Ovary (tissue), 10 donors: ENCODE measurements at regions of chr6 and their contacts with region 1.

Region 1: GRCh38 chr6:46419576-46420002 is 71.7 kb downstream of the RCAN2 start:
- DNase-seq: peak; percentile 50 to 82 (median 52)
- H3K4me3 ChIP-seq: no peak overlapping the region
- H3K27ac ChIP-seq: no peak overlapping the region
- H3K4me1 ChIP-seq: peaks cover 4% of the 10 kb centered on the region
- H3K27me3 ChIP-seq: no peaks in the 10 kb centered on the region
- CTCF ChIP-seq: peak; percentile 69 to 81 (median 71)
- EP300 ChIP-seq: no peak
- POLR2A ChIP-seq: no peak

Region 2: DNA sequence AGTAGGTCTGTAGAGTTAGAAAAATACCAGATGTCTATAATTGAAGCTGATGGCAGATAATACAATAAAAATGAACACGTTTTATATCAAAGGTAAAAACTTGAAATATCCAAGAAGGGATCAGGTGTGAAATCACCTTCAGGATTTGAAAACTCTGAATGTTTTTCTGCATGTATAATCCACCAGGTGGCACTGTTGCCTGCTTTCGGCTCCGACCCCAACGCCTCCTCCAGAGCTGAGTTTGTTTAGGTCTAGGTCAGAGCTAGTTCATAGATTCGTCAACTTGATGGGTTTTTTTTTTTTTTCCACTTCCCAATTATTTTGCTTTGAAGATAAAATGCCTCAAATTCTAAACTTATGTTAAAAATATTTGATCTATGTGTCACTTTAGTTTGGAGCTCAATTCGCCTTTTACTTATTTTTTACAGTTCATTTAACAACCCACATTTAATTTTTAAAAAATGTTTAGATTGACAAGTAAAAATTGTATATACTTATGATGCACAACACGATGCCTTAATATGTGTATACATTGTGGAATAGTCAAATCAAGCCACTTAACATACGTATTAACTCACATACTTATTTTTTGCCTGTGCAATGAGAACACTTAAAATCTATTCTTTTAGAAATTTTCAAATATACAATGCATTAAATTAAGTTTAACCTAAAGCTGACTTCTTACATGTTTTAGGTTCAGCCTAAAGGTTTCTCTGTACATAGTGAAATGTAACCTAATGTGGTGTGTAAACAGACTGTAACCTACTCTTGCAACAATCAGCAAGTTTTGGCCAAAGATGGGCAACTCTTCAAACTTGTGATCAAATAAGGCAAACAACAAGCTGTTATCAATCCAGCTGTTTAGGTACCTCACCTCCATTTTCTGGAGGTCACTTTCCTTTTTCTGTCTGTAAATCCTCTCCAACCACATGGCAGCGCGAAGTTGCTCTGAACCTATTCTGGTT is 329.2 kb before region 1 on chr6:
- intact Hi-C with region 1: loop called in 1 of 4 experiments (anchors 10 kb)
- DNase-seq: peak; percentile 23 to 48 (median 43)
- H3K4me3 ChIP-seq: no peak overlapping the region
- H3K27ac ChIP-seq: no peak overlapping the region
- H3K4me1 ChIP-seq: no peaks in the 10 kb centered on the region
- H3K27me3 ChIP-seq: no peaks in the 10 kb centered on the region
- CTCF ChIP-seq: peak; percentile 32 to 42 (median 33)
- EP300 ChIP-seq: no peak
- POLR2A ChIP-seq: no peak

Region 3: DNA sequence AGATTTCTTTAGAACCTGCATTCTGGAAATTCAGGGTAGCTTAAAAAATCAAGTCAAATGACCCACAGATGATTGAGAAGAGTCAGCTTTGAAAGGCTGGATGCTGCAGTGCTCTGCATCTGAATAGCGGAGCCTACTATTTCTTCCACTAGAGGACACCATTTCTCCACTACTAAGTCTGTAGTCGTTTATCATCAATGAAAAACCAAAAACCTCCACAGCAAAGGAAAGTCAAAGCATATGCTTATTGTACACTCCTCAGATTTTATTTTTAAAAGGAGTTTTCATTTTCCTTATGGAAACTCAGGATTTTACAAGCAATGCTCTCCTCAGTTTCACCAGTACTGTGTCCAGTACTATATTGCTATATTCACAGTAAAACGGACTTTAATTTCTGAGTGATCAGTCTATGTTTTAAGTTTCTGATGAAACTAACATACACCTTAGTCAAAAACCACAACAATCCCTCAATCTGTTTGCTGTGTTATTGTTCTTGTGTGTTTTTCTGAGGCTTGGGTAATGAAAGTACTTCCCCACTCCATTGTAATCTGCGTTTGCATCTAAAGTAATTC is 198.3 kb before region 1 on chr6:
- intact Hi-C with region 1: loop called in 3 of 4 experiments (anchors 5 to 10 kb)
- DNase-seq: no peak
- H3K4me3 ChIP-seq: no peak overlapping the region
- H3K27ac ChIP-seq: no peak overlapping the region
- H3K4me1 ChIP-seq: no peaks in the 10 kb centered on the region
- H3K27me3 ChIP-seq: no peaks in the 10 kb centered on the region
- CTCF ChIP-seq: peak; percentile 19 to 81 (median 79)
- EP300 ChIP-seq: no peak
- POLR2A ChIP-seq: no peak

Region 4: GRCh38 chr6:46325561-46326530 is 93.7 kb before region 1 on chr6:
- intact Hi-C with region 1: no loop called
- DNase-seq: peak in 4 of 5 donors; percentile 26 to 42 (median 36)
- H3K4me3 ChIP-seq: no peak overlapping the region
- H3K27ac ChIP-seq: peak overlapping the region in 1 of 2 donors; percentile 42
- H3K4me1 ChIP-seq: peaks cover 31% of the 10 kb centered on the region
- H3K27me3 ChIP-seq: no peaks in the 10 kb centered on the region
- CTCF ChIP-seq: no peak
- EP300 ChIP-seq: no peak
- POLR2A ChIP-seq: no peak

Region 5: GRCh38 chr6:46473881-46474280 is 54.3 kb after region 1 on chr6:
- intact Hi-C with region 1: loop called in 1 of 4 experiments (anchors 10 kb)
- DNase-seq: no peak
- H3K4me3 ChIP-seq: no peak overlapping the region
- H3K27ac ChIP-seq: no peak overlapping the region
- H3K4me1 ChIP-seq: no peaks in the 10 kb centered on the region
- H3K27me3 ChIP-seq: no peaks in the 10 kb centered on the region
- CTCF ChIP-seq: no peak
- EP300 ChIP-seq: no peak
- POLR2A ChIP-seq: no peak

Region 6: DNA sequence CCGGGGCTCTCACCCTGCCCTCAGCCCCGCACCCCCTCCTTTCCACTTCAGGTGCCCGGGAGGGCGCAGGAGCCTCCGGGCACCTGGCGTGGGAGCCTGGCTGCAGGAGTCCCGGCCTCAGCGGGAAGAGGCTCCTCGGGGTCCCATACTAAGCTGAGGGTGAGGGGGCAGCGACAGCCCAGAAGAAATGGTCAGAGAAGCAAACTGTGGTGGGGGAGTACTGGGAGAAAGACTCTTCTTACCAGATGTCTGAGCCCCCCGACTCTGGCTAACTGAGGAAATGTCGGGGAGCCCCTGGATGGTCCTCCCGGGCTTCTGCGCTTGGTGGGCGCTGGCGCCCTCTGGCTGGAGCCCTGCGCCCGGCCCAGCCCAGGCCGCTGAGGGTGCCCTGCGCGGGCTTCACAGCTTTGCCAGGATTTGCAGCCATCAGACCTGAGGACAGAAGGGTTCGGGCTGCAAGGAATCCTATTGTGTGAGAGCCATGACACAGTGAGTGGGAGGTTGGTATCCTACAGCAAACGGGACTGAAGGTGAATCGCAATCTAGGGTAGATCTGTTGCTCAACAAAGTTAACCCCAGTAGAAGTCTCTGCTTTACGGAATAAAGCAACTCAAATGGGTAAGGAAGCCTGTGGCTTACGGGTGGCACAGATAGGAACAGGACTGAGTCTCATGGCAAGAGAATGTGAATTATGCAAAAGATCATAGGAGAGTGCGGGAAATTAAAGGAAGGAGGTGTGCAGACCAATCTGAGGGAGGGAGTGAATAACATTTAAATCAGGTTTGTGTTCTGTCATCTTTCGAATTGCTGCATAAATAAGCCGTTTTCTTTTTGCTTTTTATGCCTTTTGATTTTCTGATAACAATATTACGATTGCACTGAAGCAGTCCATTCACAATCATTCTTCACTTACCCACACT is 72.3 kb after region 1 on chr6:
- intact Hi-C with region 1: loop called in 2 of 4 experiments (anchors 2 to 10 kb)
- DNase-seq: peak; percentile 50 to 74 (median 60)
- H3K4me3 ChIP-seq: peak overlapping the region; percentile 56
- H3K27ac ChIP-seq: peak overlapping the region; percentile 74 to 84
- H3K4me1 ChIP-seq: peaks cover 3% of the 10 kb centered on the region
- H3K27me3 ChIP-seq: no peaks in the 10 kb centered on the region
- CTCF ChIP-seq: peak; percentile 55 to 66 (median 59)
- EP300 ChIP-seq: no peak
- POLR2A ChIP-seq: no peak

Region 7: DNA sequence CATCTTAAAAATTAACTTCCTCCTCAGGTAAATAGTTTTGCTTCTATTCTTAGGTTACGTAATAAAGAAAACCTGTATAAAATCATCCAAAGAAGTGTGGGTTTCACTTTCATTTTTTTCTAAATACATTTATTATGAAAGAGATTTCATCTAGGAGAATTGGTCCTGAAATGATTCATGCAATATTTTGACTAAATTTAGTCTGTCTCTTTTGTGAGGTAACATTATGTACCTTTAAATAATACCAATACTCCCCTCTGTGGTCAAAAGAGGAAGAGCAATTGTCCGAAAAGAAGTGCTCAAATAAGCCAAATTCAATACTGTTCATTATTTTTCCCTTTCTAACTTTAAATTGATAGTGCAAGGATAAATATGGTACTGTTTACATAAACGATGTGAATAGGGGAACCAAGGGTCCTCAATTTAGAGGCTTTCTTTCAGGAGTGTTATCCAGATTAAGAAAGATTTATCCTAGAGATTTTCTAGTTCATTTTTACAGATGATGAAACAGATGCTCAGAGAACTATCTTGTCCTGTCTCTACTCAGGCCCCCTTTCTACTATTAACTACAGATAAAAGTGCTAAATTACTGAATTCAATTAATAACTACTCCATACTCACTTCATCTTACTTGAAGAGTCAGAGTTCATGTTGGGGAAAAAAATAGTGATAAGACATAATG is 206.8 kb after region 1 on chr6:
- intact Hi-C with region 1: loop called (anchors 5 to 10 kb)
- DNase-seq: no peak
- H3K4me3 ChIP-seq: no peak overlapping the region
- H3K27ac ChIP-seq: no peak overlapping the region
- H3K4me1 ChIP-seq: no peaks in the 10 kb centered on the region
- H3K27me3 ChIP-seq: no peaks in the 10 kb centered on the region
- CTCF ChIP-seq: peak; percentile 28 to 75 (median 46)
- EP300 ChIP-seq: no peak
- POLR2A ChIP-seq: no peak